ENCODE measurements at regions of chr13 and their contacts with region 1.

Region 1: DNA sequence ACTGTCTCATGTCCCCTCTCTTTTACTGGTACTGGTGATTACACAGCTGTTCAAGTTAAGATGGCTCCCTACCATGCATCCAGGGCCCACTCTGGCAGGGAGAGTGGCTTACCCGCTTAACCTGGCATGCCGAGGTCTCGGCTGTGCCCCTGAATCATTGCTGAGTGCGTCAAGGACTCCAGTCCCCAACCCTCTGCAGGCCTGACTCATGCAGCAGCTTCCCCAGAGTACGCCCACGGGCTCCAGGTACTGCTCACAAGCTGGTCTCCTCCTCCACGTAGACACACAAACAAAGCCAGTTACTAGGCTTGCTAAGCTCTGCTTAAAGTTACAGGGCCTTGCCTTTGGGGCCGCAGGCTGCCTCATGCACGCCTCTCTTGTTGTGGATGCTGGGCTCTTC is 447.4 kb downstream of the COG6 start:
- DNase-seq: peak; percentile 97
- H3K4me3 Mint-ChIP-seq: peak overlapping the region; percentile 66
- H3K27ac Mint-ChIP-seq: peak overlapping the region; percentile 97
- H3K4me1 Mint-ChIP-seq: peaks cover 37% of the 10 kb centered on the region
- H3K27me3 Mint-ChIP-seq: no peaks in the 10 kb centered on the region

Region 2: GRCh38 chr13:39952249-39953233 is 150.3 kb before region 1 on chr13:
- CTCF ChIA-PET with region 1: no interaction called
- intact Hi-C with region 1: loop called (anchors 5 kb)
- DNase-seq: peak; percentile 27
- H3K4me3 Mint-ChIP-seq: no peak overlapping the region
- H3K27ac Mint-ChIP-seq: peak overlapping the region; percentile 5
- H3K4me1 Mint-ChIP-seq: peaks cover 48% of the 10 kb centered on the region
- H3K27me3 Mint-ChIP-seq: no peaks in the 10 kb centered on the region

Region 3: GRCh38 chr13:40116008-40116407 is 13.2 kb after region 1 on chr13:
- CTCF ChIA-PET with region 1: interaction called, 3 read pairs
- intact Hi-C with region 1: loop called (anchors 1 kb)
- DNase-seq: peak; percentile 59
- H3K4me3 Mint-ChIP-seq: no peak overlapping the region
- H3K27ac Mint-ChIP-seq: peak overlapping the region; percentile 66
- H3K4me1 Mint-ChIP-seq: peaks cover 15% of the 10 kb centered on the region
- H3K27me3 Mint-ChIP-seq: no peaks in the 10 kb centered on the region

Region 4: DNA sequence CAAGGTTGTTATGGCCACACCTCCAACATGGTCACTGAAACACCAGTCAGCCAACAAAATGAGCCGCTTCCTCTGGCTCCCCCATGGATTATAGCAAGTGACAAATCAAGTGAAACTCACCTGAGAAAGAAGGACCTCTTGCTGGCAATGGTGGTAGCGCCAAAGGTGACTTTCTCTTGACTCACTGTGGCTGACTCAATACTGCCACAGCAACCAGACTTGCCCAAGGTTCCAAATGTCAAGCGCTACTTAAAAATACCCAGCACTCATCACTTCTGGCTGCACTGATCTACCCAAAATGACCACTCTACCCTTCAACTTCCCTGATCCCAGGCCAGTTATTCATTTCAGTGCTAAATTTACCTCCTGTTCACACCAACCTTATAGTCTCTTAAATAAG is 68.1 kb after region 1 on chr13:
- CTCF ChIA-PET with region 1: no interaction called
- intact Hi-C with region 1: loop called (anchors 1 kb)
- DNase-seq: peak; percentile 82
- H3K4me3 Mint-ChIP-seq: no peak overlapping the region
- H3K27ac Mint-ChIP-seq: peak overlapping the region; percentile 9
- H3K4me1 Mint-ChIP-seq: peaks cover 41% of the 10 kb centered on the region
- H3K27me3 Mint-ChIP-seq: no peaks in the 10 kb centered on the region

Region 5: DNA sequence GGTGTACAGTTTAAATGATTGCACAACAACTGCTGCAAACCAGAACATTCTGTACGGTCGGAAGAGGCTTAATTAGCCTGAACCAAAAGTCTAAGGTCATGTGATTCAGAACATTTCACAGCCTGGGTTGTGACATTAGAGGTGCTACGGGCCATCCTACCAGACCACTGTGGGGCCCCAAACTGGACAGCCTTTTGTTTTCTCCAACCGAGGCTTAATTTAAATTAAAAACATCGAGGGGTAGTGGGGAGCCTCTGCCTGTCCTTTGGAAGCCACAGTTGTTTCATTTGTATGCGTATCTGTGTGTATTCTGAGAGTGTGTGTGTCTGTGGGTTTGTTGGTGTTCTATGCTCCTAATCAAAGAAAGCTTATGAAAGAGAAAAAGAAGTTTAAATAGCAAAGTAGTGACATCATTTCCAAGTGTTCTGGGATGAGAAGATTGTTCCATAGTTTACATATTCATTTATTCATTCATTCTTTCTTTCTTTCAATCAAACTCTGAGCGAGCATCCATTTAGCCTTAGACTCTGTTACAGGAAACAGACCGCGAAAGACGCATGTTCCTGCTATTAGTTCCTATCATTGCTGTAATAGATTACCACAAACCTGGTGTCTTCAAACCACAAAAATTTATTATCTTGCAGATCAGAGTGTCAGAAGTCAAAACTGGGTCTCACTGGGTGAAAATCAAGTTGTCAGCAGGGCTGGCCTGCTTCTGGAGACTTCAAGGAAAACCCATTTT is 118.8 kb after region 1 on chr13:
- CTCF ChIA-PET with region 1: no interaction called
- intact Hi-C with region 1: loop called (anchors 1 kb)
- DNase-seq: peak; percentile 80
- H3K4me3 Mint-ChIP-seq: peak overlapping the region; percentile 25
- H3K27ac Mint-ChIP-seq: peak overlapping the region; percentile 92
- H3K4me1 Mint-ChIP-seq: peaks cover 69% of the 10 kb centered on the region
- H3K27me3 Mint-ChIP-seq: no peaks in the 10 kb centered on the region

Region 6: GRCh38 chr13:40371531-40372125 is 268.8 kb after region 1 on chr13:
- CTCF ChIA-PET with region 1: interaction called, 3 read pairs
- intact Hi-C with region 1: loop called (anchors 2 kb)
- DNase-seq: no peak
- H3K4me3 Mint-ChIP-seq: no peak overlapping the region
- H3K27ac Mint-ChIP-seq: no peak overlapping the region
- H3K4me1 Mint-ChIP-seq: peaks cover 49% of the 10 kb centered on the region
- H3K27me3 Mint-ChIP-seq: no peaks in the 10 kb centered on the region

Region 7: DNA sequence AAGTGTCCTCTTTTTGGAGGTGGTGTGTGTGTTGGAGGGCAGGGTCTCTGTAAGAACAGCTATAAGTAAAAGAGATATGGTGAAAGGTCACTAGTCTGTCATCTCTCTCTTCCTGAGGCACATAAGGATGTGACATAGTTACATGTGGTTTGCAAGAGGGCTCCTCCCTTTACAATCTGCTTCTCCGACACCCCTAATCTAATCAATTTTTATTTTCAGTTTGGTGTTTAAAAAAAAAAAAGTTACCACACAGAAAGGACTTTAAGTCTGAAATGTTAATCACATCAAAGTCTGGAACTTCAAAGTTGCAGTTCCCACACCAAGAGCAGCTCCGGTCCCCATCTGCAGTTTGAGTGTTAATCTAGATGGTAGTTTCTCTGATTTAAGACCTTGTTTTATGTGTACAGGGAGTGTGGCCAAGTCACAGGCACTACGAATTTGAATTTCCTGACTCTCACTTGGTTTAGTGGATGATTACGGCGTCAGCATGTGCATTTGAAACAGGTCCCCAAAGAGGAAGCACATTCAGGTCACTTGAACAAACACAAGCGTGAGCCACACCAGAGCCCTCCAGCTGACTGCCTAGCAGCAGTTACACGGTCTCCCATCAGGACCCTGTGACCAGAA is 510.4 kb after region 1 on chr13:
- CTCF ChIA-PET with region 1: no interaction called
- intact Hi-C with region 1: loop called (anchors 5 kb)
- DNase-seq: peak; percentile 73
- H3K4me3 Mint-ChIP-seq: peak overlapping the region; percentile 71
- H3K27ac Mint-ChIP-seq: peak overlapping the region; percentile 95
- H3K4me1 Mint-ChIP-seq: peaks cover 93% of the 10 kb centered on the region
- H3K27me3 Mint-ChIP-seq: no peaks in the 10 kb centered on the region

Region 8: DNA sequence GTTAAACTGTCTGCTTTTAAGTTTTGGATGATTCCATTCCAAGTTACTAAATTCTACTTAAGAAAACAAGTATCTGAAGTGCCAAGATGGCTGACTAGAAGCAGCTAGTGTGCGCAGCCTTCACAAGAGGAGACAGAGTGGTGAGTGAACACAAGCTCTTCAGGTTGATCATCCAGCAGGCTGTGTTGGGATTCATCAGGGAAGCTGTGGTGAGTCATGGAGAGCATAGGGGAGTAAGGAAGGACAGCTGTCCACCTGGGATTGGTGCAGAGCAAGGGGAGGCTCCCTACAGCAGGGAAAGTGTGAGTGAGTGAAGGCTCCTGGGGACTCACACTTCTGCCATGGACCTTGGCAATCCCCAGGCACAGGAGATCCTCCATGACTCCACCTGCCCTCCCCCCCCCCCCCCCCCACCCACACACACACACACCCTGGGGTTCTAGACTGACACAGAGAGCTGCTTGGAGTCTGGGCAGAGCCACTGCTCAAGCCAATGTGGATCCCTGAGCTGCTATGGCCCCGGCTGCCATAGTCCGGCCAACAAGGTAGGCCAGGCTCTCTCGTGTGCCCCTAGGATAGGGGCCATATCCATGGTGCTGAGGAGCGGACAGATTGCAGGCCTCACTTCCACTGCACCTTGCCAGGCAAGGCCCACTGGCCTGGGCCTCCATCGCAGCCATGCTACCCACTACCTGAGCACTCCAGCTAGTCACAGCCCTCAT is 710.0 kb after region 1 on chr13:
- CTCF ChIA-PET with region 1: no interaction called
- intact Hi-C with region 1: no loop called
- DNase-seq: no peak
- H3K4me3 Mint-ChIP-seq: no peak overlapping the region
- H3K27ac Mint-ChIP-seq: no peak overlapping the region
- H3K4me1 Mint-ChIP-seq: no peaks in the 10 kb centered on the region
- H3K27me3 Mint-ChIP-seq: no peaks in the 10 kb centered on the region